ENCODE measurements at regions of chr7 and their contacts with region 1.

Region 1: GRCh38 chr7:92534572-92534971 is 6.0 kb downstream of the RBM48 start:
- DNase-seq: no peak
- H3K4me3 ChIP-seq: no peak overlapping the region
- H3K27ac ChIP-seq: no peak overlapping the region
- H3K4me1 ChIP-seq: peaks cover 2 to 23% (median 20%) of the 10 kb centered on the region in 4 donors
- H3K27me3 ChIP-seq: no peaks in the 10 kb centered on the region
- CTCF ChIP-seq: no peak
- EP300 ChIP-seq: no peak
- POLR2A ChIP-seq: no peak

Region 2: DNA sequence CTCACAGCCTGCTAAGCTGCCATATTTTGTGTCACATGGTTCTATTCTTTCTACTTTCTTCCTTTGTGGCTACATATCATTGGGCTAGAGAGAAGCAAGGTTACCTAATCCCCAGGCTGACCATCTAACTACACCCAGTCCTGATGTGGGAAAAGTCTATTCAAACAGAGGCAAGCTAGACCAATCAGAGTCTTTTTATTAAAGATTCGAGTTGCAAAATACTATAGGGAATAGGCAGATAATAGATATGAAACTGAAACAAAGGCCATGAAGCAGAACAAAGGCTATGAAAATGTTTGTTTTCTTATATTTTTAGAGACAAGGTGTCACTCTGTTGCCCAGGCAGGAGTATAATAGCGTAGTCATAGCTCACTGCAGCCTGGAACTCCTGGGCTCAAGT is 690.7 kb before region 1 on chr7:
- intact Hi-C with region 1: no loop called
- DNase-seq: no peak
- H3K4me3 ChIP-seq: no peak overlapping the region
- H3K27ac ChIP-seq: no peak overlapping the region
- H3K4me1 ChIP-seq: no peaks in the 10 kb centered on the region
- H3K27me3 ChIP-seq: no peaks in the 10 kb centered on the region
- CTCF ChIP-seq: no peak
- EP300 ChIP-seq: no peak
- POLR2A ChIP-seq: no peak

Region 3: GRCh38 chr7:92584996-92585395 is 50.4 kb after region 1 on chr7:
- intact Hi-C with region 1: loop called (anchors 10 kb)
- DNase-seq: no peak
- H3K4me3 ChIP-seq: no peak overlapping the region
- H3K27ac ChIP-seq: peak overlapping the region in 1 of 4 donors; percentile 7
- H3K4me1 ChIP-seq: peaks cover 40 to 55% (median 54%) of the 10 kb centered on the region in 4 donors
- H3K27me3 ChIP-seq: no peaks in the 10 kb centered on the region
- CTCF ChIP-seq: no peak
- EP300 ChIP-seq: no peak
- POLR2A ChIP-seq: no peak